ENCODE measurements at regions of chr13 and their contacts with region 1.

Region 1: DNA sequence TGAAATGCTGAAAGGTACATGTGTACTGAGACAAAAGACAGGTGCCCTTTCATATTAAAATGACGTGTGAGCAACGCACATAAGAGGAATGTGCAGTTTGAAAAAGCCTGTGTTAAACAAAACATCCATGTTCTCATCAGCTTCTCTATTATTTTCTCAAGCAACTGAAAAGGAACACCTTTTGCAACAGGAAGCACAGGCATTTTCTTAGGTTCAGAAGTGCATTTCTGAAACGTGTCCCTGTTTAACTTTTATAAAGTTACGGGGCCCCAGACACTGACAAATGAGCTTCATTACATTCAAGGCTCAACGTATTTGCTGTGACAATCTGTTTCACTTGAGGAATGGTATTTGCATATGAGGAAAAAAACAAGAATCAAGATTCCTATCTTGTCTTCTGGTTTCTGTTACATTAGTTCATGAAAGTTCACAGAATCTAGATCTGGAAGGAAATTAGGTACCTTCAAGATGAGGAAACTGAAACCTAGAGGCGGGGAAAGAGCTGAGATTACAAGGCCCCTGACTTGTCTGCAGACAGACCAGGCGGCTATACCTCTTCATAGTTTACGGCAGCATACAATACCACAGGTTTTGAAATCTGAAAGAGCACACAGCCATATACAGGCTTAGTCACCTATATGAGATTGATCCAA is 431.7 kb downstream of the KLF12 start:
- DNase-seq: peak; percentile 41
- H3K4me3 Mint-ChIP-seq: no peak overlapping the region
- H3K27ac Mint-ChIP-seq: peak overlapping the region; percentile 60
- H3K4me1 Mint-ChIP-seq: peaks cover 34% of the 10 kb centered on the region
- H3K27me3 Mint-ChIP-seq: no peaks in the 10 kb centered on the region

Region 2: GRCh38 chr13:73228546-73228945 is 474.0 kb before region 1 on chr13:
- intact Hi-C with region 1: loop called (anchors 2 kb)
- DNase-seq: peak; percentile 16
- H3K4me3 Mint-ChIP-seq: no peak overlapping the region
- H3K27ac Mint-ChIP-seq: no peak overlapping the region
- H3K4me1 Mint-ChIP-seq: peaks cover 38% of the 10 kb centered on the region
- H3K27me3 Mint-ChIP-seq: peaks cover 16% of the 10 kb centered on the region

Region 3: GRCh38 chr13:73625562-73626339 is 76.8 kb before region 1 on chr13:
- intact Hi-C with region 1: loop called (anchors 5 kb)
- DNase-seq: peak; percentile 41
- H3K4me3 Mint-ChIP-seq: no peak overlapping the region
- H3K27ac Mint-ChIP-seq: no peak overlapping the region
- H3K4me1 Mint-ChIP-seq: peaks cover 44% of the 10 kb centered on the region
- H3K27me3 Mint-ChIP-seq: peaks cover 1% of the 10 kb centered on the region

Measured in activated T-helper 2 cell treated with anti-CD3 and anti-CD28 coated beads, Interferon-gamma antibody, Interleukin-2, Interleukin-4, amounts not matched to agents 10 μg/mL and 5 μg/mL and 100 μg/mL, durations not matched to agents 14 hours and 24 hours and 36 hours (primary cell).